ENCODE measurements at regions of chr1 and their contacts with region 1.

Region 1: DNA sequence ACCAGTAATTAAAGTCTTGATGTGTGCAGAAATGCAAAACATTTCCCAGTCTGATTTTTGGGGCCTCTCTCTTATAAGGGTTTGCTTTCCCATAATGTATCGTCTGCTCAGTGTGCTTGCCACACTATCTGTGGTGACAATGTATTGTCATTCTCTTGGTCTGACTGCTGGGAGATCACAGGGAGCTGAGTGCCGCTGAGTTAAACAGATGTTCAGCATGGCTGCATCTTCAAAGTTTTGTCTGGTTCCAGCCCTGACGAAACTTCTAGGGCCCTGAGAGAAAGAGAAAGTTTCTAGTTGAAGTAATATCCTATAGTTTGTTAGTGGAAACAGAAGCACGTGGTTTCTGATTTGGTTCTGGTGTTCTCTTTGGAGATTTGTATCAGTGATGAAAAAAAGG is 42.6 kb downstream of the DNM3 start:
- DNase-seq: no peak
- H3K4me3 ChIP-seq: no peak overlapping the region
- H3K27ac ChIP-seq: no peak overlapping the region
- H3K4me1 ChIP-seq: no peaks in the 10 kb centered on the region
- H3K27me3 ChIP-seq: no peaks in the 10 kb centered on the region
- CTCF ChIP-seq: no peak
- POLR2A ChIP-seq: no peak

Region 2: DNA sequence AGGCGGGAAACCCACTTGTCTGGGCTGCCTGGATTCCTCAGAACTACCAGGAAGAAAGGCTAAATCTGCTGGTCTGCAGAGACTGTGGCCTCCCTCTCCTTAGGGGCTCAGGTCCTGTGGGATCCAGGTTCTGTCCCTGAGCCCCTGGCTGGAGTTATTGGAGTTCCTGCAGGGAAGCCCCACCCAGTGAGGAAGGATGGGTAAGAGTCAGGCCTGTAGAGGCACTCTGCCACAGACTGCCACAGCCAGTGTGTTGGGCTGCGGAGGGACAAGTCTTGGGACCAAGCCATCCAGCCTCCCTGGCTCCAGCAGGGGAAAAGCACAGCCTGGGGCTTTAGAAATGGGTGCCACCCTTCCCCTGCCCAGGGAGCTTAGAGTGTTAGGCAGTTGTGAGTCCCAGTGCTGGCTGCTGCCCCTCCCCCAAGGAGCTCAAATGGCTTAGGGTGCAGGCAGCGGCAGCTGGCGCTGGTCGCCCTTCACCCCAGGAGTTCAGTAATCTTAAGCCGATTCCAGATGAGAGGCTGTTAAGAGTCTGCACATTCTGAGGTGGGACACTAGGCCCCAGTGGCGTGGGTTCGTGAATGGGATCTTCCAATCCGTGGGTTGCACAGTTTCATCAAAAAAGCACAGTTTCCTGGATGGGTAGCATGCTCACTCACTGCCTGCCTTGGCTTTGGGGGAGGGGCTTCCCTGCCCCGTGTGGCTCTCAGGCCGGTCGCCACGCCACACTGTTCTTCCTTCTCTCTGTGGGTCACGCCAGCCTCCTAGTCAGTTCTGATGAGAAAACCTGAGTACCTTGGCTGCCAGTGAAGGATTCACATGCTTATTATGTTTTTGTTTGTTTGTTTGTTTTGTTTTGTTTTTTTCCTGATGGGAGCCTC is 850.8 kb before region 1 on chr1:
- CTCF ChIA-PET with region 1: no interaction called
- POLR2A ChIA-PET with region 1: no interaction called
- dilution Hi-C with region 1: no loop called
- intact Hi-C with region 1: no loop called
- DNase-seq: no peak
- H3K4me3 ChIP-seq: no peak overlapping the region
- H3K27ac ChIP-seq: no peak overlapping the region
- H3K4me1 ChIP-seq: no peaks in the 10 kb centered on the region
- H3K27me3 ChIP-seq: no peaks in the 10 kb centered on the region
- CTCF ChIP-seq: no peak
- POLR2A ChIP-seq: no peak

Region 3: DNA sequence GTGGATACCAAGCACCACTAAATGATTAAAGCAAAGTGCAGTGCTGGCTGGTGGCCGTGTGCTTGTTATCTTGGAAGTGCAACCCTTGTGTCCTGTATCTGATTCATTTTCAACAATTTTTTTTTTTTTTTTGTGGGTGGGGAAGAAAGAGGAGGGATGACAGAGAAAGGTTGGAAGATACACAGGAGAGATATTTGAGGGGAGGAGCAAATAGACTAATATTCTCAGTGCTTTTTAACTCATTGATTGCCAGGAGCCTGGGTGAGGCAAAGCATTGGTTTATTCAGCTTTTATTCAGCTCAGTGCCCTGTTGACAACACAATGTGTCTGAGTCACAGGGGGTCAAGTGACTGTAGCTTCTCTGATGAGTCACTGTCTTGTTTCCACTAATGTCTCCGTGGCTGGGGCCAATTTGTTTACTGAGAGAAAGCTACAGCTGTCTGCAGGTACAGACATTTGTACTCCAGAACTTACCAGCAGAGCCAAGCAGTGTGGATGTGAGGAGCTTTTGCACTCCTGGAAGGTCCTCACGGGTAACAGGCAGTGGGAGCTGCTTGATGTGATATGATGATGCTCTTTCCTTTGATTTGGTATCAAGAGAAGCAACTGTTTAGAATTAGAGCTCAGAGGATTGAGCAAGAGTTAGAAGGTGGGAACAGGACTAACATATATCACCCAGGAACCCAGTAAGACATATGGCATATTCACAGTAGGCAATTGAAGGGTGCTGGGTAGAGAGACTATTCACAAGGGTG is 66.2 kb before region 1 on chr1:
- CTCF ChIA-PET with region 1: no interaction called
- POLR2A ChIA-PET with region 1: no interaction called
- dilution Hi-C with region 1: no loop called
- intact Hi-C with region 1: loop called (anchors 5 kb)
- DNase-seq: peak; percentile 53
- H3K4me3 ChIP-seq: no peak overlapping the region
- H3K27ac ChIP-seq: no peak overlapping the region
- H3K4me1 ChIP-seq: peaks cover 6% of the 10 kb centered on the region
- H3K27me3 ChIP-seq: peaks cover 0 to 2% of the 10 kb centered on the region in 2 experiments
- CTCF ChIP-seq: no peak
- POLR2A ChIP-seq: no peak

Region 4: DNA sequence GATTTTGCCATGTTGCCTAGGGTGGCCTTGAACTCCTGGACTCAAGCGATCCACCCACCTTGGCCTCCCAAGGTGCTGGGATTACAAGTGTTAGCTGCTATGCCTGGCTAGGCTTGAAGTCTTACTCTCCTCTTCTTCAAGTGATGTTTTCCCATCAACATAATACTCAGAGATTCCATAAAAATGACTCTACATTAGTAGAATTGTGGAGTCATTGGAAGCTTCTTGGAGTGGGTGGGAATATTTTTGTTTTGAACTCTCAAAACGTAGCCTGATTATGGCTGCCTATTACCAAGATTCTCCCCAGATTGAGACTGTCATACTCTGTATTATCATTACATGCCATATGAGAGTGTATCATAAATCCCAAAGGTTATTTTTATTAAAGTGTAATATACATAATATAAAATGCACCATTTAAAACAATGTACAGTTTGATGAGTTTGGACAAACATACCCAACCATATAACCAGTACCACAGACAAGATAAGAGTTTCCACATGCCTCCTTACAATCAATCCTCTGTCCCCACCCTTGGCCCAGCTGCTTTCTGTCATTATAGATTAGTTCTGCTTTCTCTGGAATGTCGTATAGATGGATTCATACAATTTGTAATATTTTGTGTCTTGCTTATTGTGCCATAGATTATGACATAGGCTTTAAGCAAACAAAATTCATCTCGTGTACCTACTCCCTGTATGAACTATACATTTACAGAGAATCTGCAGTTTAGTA is 50.6 kb before region 1 on chr1:
- CTCF ChIA-PET with region 1: no interaction called
- POLR2A ChIA-PET with region 1: no interaction called
- dilution Hi-C with region 1: no loop called
- intact Hi-C with region 1: no loop called
- DNase-seq: no peak
- H3K4me3 ChIP-seq: no peak overlapping the region
- H3K27ac ChIP-seq: no peak overlapping the region
- H3K4me1 ChIP-seq: no peaks in the 10 kb centered on the region
- H3K27me3 ChIP-seq: peaks cover 0 to 2% of the 10 kb centered on the region in 2 experiments
- CTCF ChIP-seq: no peak
- POLR2A ChIP-seq: no peak

Region 5: GRCh38 chr1:171863531-171863930 is 20.3 kb before region 1 on chr1:
- CTCF ChIA-PET with region 1: no interaction called
- POLR2A ChIA-PET with region 1: no interaction called
- dilution Hi-C with region 1: no loop called
- intact Hi-C with region 1: loop called (anchors 1 kb)
- DNase-seq: no peak
- H3K4me3 ChIP-seq: no peak overlapping the region
- H3K27ac ChIP-seq: no peak overlapping the region
- H3K4me1 ChIP-seq: peaks cover 3% of the 10 kb centered on the region
- H3K27me3 ChIP-seq: no peaks in the 10 kb centered on the region
- CTCF ChIP-seq: no peak
- POLR2A ChIP-seq: no peak

Region 6: DNA sequence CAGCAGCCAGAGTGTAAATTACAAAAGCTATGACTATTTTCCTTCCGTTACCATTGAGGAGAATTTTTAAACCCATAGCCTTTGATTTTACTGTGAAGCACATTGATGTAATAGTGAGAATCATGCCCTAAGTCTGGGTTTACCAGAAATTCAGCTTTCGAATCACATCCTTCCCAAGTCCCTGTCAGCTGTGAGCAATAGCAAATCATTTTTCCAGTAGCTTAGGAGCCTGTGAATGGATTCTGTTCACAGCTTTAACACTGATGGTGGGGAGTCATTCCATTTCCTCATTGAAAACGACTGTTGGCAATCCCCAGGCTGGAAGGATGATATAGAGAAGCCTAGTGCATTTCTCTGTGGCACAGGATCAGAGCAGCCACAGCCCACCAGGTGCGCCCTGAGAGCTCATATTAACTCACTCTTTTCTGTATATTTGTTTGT is 454.5 kb after region 1 on chr1:
- CTCF ChIA-PET with region 1: no interaction called
- POLR2A ChIA-PET with region 1: no interaction called
- dilution Hi-C with region 1: no loop called
- intact Hi-C with region 1: no loop called
- DNase-seq: no peak
- H3K4me3 ChIP-seq: no peak overlapping the region
- H3K27ac ChIP-seq: no peak overlapping the region
- H3K4me1 ChIP-seq: peaks cover 13% of the 10 kb centered on the region
- H3K27me3 ChIP-seq: no peaks in the 10 kb centered on the region
- CTCF ChIP-seq: no peak
- POLR2A ChIP-seq: no peak

Measured in endothelial cell of umbilical vein (primary cell).